Tibial artery (tissue), 4 donors: ENCODE measurements at regions of chr1 and their contacts with region 1.

Region 1: GRCh38 chr1:37691497-37692077 is 729 bp upstream of the CDCA8 start:
- DNase-seq: peak; percentile 30 to 74
- H3K4me3 ChIP-seq: peak overlapping the region; percentile 62 to 77
- H3K27ac ChIP-seq: peak overlapping the region; percentile 82 to 90
- H3K4me1 ChIP-seq: peaks cover 0 to 36% (median 27%) of the 10 kb centered on the region in 4 donors
- H3K27me3 ChIP-seq: no peaks in the 10 kb centered on the region
- CTCF ChIP-seq: no peak

Region 2: DNA sequence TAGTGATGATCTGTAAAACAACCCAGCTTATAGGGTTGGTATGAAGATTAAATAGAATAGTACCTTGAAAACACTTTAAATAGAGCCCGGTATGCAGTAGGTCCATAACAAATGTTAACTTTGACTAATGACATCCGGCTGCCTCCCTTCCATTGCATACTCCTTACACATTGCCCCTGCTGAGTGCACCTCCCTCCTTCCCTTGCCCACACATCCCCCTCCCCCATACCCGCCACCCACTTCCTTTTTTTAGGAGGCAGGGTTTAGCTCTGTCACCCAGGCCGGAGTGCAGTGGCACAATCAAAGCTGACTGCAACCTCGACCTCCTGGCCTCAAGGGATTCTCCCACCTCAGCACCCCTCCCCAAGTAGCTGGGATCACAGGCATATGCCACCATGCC is 241.7 kb before region 1 on chr1:
- intact Hi-C with region 1: loop called (anchors 5 kb)
- DNase-seq: no peak
- H3K4me3 ChIP-seq: no peak overlapping the region
- H3K27ac ChIP-seq: no peak overlapping the region
- H3K4me1 ChIP-seq: peaks cover 0 to 9% (median 2%) of the 10 kb centered on the region in 4 donors
- H3K27me3 ChIP-seq: peaks cover 0 to 42% of the 10 kb centered on the region in 2 donors
- CTCF ChIP-seq: no peak

Region 3: DNA sequence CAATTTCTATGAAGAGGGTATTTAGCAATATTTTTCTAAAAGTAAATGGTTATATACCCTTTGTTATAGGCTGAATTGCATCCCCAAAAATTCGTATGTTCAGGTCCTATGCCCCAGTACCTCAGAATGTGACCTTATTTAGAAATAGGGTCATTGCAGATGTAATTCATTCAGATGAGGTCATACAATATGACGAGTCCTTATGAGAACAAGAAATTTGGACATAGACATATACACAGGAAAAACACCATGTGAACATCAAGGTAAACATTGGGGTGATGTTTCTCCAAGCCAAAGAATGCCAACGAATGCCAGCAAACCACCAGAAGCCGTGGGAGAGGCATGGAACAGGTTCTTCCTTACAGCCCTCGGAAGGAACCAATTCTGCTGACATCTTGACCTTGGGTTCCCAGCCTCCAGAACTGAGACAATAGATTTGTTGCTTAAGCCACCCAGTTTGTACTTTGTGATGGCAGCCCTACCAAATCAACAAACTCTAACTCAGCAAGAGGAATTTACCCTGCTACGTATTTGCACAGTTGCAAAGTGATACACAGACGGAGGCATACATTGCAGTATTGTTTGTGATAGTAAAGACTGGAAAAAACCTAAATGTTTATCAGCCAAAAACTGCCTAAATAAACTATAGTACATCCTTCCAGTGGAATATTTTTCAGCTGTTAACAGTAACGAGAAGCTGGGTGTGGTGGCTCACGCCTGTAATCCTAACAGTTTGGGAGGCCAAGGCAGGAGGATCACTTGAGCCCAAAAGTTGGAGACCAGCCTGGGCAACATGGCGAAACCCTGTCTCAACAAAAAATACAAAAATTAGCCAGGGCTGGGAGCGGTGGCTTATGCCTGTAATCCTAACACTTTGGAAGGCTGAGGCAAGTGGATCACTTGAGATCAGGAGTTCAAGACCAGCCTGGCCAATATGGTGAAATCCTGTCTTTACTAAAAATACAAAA is 229.8 kb before region 1 on chr1:
- intact Hi-C with region 1: no loop called
- DNase-seq: no peak
- H3K4me3 ChIP-seq: no peak overlapping the region
- H3K27ac ChIP-seq: no peak overlapping the region
- H3K4me1 ChIP-seq: peaks cover 0 to 5% (median 0%) of the 10 kb centered on the region in 4 donors
- H3K27me3 ChIP-seq: no peaks in the 10 kb centered on the region
- CTCF ChIP-seq: no peak

Region 4: GRCh38 chr1:37595440-37596319 is 95.9 kb before region 1 on chr1 and contains the start of gene GNL2:
- intact Hi-C with region 1: loop called (anchors 2 kb)
- DNase-seq: peak; percentile 97 to 98
- H3K4me3 ChIP-seq: peak within 1 kb of the TSS; percentile 69 to 72
- H3K27ac ChIP-seq: peak within 1 kb of the TSS; percentile 79 to 82
- H3K4me1 ChIP-seq: peaks cover 0 to 28% (median 24%) of the 10 kb centered on the region in 4 donors
- H3K27me3 ChIP-seq: no peaks in the 10 kb centered on the region
- CTCF ChIP-seq: no peak

Region 5: GRCh38 chr1:37622131-37622530 is 69.5 kb before region 1 on chr1:
- intact Hi-C with region 1: no loop called
- DNase-seq: no peak
- H3K4me3 ChIP-seq: no peak overlapping the region
- H3K27ac ChIP-seq: no peak overlapping the region
- H3K4me1 ChIP-seq: no peaks in the 10 kb centered on the region
- H3K27me3 ChIP-seq: peaks cover 0 to 43% of the 10 kb centered on the region in 2 donors
- CTCF ChIP-seq: no peak